ENCODE measurements at regions of chr1 and their contacts with region 1.

Region 1: GRCh38 chr1:212665241-212666115 is 34.2 kb downstream of the BATF3 start:
- DNase-seq: peak; percentile 97

Region 2: GRCh38 chr1:212678456-212679410 is 13.3 kb after region 1 on chr1:
- CTCF ChIA-PET with region 1: interaction called, 17 read pairs
- POLR2A ChIA-PET with region 1: no interaction called
- DNase-seq: no peak

Measured in HEK293T (cell line).